Caco-2 (cell line): ENCODE measurements at regions of chr11 and their contacts with region 1.

Region 1: GRCh38 chr11:65888163-65888814 is at the start of gene FIBP:
- DNase-seq: peak; percentile 98
- H3K4me3 ChIP-seq: peak within 1 kb of the TSS; percentile 68
- H3K4me3 Mint-ChIP-seq: peak within 1 kb of the TSS; percentile 82
- H3K27ac Mint-ChIP-seq: peak within 1 kb of the TSS; percentile 69
- H3K4me1 ChIP-seq: peaks cover 31% of the 10 kb centered on the region
- H3K4me1 Mint-ChIP-seq: peaks cover 33% of the 10 kb centered on the region
- H3K27me3 ChIP-seq: no peaks in the 10 kb centered on the region
- H3K27me3 Mint-ChIP-seq: no peaks in the 10 kb centered on the region
- CTCF ChIP-seq: peak; percentile 76 to 93
- total RNA-seq, gene FIBP: 56.8 and 61.5 TPM in 2 replicates

Region 2: DNA sequence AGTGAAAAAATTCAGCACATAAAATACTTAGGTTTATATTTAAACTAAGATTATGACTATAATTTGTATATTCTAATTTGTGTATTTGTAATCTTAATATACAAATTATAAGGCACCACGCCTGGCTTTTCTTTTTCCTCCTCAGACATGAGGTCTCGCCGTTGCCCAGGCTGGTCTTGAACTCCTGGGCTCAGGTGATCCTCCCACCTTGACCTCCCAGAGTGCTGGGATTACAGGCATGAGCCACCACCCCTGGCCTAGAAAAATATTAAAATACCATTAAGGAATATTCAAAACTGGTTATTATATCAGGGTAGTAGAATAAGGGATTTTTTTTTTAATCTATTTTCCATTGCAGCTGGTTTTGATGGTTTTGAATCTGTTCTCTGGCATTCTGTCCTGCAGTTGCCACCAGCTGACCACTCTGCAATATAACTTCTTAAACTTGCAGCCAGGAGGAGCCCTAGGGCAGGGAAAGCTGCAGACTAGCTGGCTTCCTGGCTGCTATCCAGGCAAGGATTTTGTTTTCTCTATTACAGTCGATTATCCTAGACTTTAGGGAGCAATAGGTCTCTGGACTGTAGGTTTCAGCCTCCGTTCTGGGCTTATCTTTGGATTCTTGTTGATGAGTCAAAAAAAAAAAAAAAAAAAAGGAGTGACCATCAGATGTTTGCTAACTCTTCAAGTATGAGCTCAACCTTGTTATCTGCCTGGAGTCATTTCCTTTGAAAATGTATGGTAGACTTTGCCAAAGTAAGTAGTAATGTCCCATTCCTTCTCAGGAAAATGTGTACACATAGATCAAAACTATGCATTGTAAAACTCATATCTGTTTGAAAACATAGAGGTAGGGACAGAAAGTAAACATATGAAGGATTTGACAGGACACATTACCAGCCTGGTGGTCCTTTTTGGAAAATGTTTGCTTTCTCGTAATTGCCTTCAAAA is 613.3 kb before region 1 on chr11:
- CTCF ChIA-PET with region 1: no interaction called
- POLR2A ChIA-PET with region 1: interaction called, 14 read pairs
- intact Hi-C with region 1: no loop called
- DNase-seq: peak; percentile 91 to 93
- H3K4me3 ChIP-seq: no peak overlapping the region; the same call in 1 of the 2 replicates
- H3K4me3 Mint-ChIP-seq: peak overlapping the region; percentile 63
- H3K27ac Mint-ChIP-seq: peak overlapping the region; percentile 90
- H3K4me1 ChIP-seq: peaks cover 42% of the 10 kb centered on the region
- H3K4me1 Mint-ChIP-seq: peaks cover 40% of the 10 kb centered on the region
- H3K27me3 ChIP-seq: no peaks in the 10 kb centered on the region
- H3K27me3 Mint-ChIP-seq: no peaks in the 10 kb centered on the region
- CTCF ChIP-seq: peak; percentile 79 to 81

Region 3: DNA sequence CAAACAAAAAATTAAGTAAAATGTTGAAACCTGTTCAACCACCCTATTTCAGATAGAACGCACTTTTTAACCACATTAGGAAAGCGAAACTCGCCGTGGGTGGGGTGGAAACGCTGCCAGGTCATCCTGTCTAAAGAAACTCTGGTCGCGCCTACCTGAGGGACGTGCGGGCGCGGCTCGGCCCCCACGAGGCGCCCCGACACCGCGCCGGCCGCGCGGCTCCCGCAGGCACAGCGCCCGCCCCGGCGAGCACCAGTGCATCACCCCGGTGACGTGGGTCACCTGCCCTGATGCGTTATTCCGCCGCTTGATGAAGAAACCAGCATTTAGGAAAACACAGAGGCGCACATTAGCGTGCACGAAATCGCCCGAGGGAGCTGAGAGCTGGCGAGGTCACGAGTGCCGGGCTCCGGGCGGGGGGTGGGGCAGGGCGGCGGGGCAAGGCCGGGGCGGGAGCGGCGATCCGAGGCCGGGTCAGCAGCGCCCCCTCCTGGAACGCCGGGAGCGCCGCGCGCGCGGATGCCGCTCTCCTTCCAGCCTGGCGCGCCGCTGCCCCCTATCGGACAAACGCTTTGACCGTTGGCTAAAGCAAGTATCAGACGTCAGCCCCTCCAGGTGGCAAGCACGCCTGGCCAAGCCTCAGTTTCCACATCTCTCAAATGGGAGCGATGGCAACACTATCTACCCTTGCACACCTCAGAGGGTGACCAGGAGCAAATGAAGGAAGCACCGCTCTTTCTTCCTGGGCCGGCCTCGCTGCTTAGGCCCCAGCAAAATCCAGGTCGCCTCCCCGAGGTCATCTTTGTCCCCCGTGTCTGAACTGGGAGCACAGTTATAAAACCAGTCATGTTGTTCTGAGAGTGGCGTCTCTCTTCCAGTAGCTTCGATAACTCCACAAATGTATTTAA is 70.2 kb before region 1 on chr11:
- CTCF ChIA-PET with region 1: interaction called, 13 read pairs
- POLR2A ChIA-PET with region 1: interaction called, 10 read pairs
- intact Hi-C with region 1: no loop called
- DNase-seq: peak; percentile 91 to 97
- H3K4me3 ChIP-seq: peak overlapping the region; percentile 43
- H3K4me3 Mint-ChIP-seq: peak overlapping the region; percentile 83
- H3K27ac Mint-ChIP-seq: peak overlapping the region; percentile 85
- H3K4me1 ChIP-seq: peaks cover 34% of the 10 kb centered on the region
- H3K4me1 Mint-ChIP-seq: peaks cover 33% of the 10 kb centered on the region
- H3K27me3 ChIP-seq: no peaks in the 10 kb centered on the region
- H3K27me3 Mint-ChIP-seq: no peaks in the 10 kb centered on the region
- CTCF ChIP-seq: peak; percentile 97 to 100

Region 4: GRCh38 chr11:65868076-65868667 is 20.1 kb before region 1 on chr11:
- CTCF ChIA-PET with region 1: interaction called, 241 read pairs
- POLR2A ChIA-PET with region 1: interaction called, 4 read pairs
- intact Hi-C with region 1: no loop called
- DNase-seq: no peak
- H3K4me3 ChIP-seq: no peak overlapping the region
- H3K4me3 Mint-ChIP-seq: no peak overlapping the region
- H3K27ac Mint-ChIP-seq: no peak overlapping the region
- H3K4me1 ChIP-seq: no peaks in the 10 kb centered on the region
- H3K4me1 Mint-ChIP-seq: peaks cover 4% of the 10 kb centered on the region
- H3K27me3 ChIP-seq: no peaks in the 10 kb centered on the region
- H3K27me3 Mint-ChIP-seq: no peaks in the 10 kb centered on the region
- CTCF ChIP-seq: no peak

Region 5: DNA sequence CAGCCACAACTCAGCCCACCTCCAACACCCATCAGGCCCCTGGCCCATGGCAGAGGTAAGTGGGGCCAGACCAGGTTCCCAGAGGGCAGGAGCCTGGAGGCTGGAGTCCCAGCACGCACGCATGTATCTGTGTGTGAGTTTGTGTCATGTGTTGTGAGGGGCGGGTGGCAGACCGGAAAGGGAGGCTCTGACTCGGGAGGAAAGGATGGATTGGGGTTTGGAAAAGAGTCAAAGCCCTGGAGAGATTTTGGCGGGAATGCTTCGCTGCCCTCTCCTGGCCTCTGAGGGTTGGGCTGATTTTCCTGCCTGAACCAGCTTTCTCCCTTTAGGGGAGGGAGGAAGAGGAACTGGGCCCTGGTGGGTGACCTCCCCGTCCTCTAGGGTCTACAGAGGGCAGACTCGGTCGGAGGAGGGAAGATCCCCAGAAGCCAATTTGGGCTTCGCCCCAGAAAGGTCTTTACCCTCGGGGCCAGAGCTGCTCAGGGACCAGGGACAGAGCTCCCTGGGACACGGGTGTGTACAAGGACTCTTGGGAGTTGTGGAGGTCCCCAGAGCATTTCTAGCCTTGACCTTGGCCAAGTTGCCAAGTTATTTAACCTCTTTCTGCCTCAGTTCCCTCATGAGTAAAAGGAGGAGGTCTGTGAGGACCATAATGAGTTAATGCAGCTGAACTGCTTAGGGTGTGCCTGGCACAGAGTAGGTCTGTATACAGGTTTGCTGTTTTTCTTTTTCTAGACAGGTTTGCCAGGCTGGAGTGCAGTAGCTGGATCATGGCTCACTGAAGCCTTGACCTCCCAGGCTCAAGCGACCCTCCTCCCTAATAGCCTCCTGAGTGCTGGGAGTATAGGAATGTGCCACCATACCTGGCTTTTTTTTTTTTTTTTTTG is 23.6 kb after region 1 on chr11:
- CTCF ChIA-PET with region 1: interaction called, 45 read pairs
- POLR2A ChIA-PET with region 1: interaction called, 11 read pairs
- intact Hi-C with region 1: loop called (anchors 1 kb)
- DNase-seq: peak; percentile 65 to 73
- H3K4me3 ChIP-seq: no peak overlapping the region
- H3K4me3 Mint-ChIP-seq: peak overlapping the region; percentile 28
- H3K27ac Mint-ChIP-seq: no peak overlapping the region
- H3K4me1 ChIP-seq: peaks cover 8% of the 10 kb centered on the region
- H3K4me1 Mint-ChIP-seq: peaks cover 6% of the 10 kb centered on the region
- H3K27me3 ChIP-seq: no peaks in the 10 kb centered on the region
- H3K27me3 Mint-ChIP-seq: no peaks in the 10 kb centered on the region
- CTCF ChIP-seq: peak; percentile 46 to 77

Region 6: DNA sequence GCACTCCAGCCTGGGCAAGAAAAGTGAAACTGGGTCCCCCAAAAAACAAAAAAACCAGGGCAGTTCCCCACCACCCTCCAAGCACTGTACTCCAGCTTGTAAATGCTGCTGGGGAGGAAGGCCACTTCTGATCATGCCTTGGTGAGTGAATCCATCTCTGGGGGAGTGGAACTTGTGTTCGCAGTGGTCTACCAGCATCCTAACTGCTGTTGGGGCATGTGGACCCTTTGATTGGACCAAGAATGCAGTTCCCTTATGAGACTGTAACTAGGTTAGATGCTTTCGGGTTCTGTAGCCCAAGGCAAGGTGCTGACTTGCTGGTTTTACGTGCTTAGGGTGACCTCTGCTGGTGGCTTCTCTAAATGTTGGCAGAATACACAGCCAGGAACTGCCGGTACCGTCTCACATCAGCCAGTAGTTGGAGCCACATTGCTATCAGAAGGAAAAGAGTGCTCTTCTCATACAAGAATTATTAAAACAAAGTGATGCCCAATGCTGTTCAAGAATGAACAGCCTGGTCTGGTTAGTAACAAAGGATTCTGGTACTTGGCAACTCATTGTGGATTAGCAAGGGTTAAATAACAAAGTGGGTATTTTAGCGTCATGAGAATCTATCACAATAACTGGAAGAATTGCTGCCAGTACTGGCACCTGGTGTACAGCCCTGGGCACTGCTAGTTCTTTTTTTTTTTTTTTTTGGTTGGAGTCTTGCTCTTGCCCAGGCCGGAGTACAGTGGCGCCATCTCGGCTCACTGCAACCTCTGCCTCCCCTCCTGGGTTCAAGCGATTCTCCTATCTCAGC is 100.7 kb after region 1 on chr11:
- CTCF ChIA-PET with region 1: interaction called, 26 read pairs
- POLR2A ChIA-PET with region 1: interaction called, 10 read pairs
- intact Hi-C with region 1: loop called (anchors 1 kb)
- DNase-seq: peak; percentile 91 to 93
- H3K4me3 ChIP-seq: no peak overlapping the region
- H3K4me3 Mint-ChIP-seq: no peak overlapping the region
- H3K27ac Mint-ChIP-seq: no peak overlapping the region
- H3K4me1 ChIP-seq: no peaks in the 10 kb centered on the region
- H3K4me1 Mint-ChIP-seq: no peaks in the 10 kb centered on the region
- H3K27me3 ChIP-seq: no peaks in the 10 kb centered on the region
- H3K27me3 Mint-ChIP-seq: no peaks in the 10 kb centered on the region
- CTCF ChIP-seq: peak; percentile 94 to 97

Region 7: DNA sequence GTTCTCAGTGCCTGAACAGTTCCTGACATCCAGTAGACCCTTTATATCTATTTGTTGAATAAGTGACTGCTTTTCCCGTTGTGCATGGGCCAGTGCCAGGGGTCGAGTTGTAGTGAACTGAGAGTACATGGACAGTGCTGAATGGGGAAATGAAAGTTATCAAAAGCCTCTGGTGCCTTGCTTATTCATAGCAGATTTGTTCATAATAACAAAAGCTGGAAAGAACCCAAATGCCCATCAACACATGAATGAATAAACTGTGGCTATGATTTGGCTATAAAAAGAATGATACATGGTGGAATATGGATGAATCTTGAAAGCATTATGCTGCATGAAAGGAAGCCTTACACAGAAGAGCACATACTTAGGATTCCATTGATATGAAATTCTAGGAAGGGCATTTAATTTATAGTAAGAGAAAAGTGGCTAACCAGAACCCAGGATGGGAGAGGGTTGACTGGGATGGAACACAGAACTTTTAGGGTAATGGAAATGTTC is 224.4 kb after region 1 on chr11:
- CTCF ChIA-PET with region 1: no interaction called
- POLR2A ChIA-PET with region 1: interaction called, 18 read pairs
- intact Hi-C with region 1: no loop called
- DNase-seq: no peak
- H3K4me3 ChIP-seq: no peak overlapping the region
- H3K4me3 Mint-ChIP-seq: peak overlapping the region; percentile 39
- H3K27ac Mint-ChIP-seq: peak overlapping the region; percentile 89
- H3K4me1 ChIP-seq: peaks cover 71% of the 10 kb centered on the region
- H3K4me1 Mint-ChIP-seq: peaks cover 51% of the 10 kb centered on the region
- H3K27me3 ChIP-seq: no peaks in the 10 kb centered on the region
- H3K27me3 Mint-ChIP-seq: no peaks in the 10 kb centered on the region
- CTCF ChIP-seq: no peak